ENCODE measurements at regions of chr17 and their contacts with region 1.

Region 1: GRCh38 chr17:59753522-59754467 is 46.3 kb downstream of the VMP1 start:
- DNase-seq: peak in 14 of 35 experiments; percentile 2 to 89 (median 13)
- ATAC-seq: peak; percentile 85 to 92 (median 90)
- H3K4me3 ChIP-seq: no peak overlapping the region
- H3K4me3 Mint-ChIP-seq: peak overlapping the region; percentile 20 to 63 (median 56)
- H3K27ac ChIP-seq: peak overlapping the region; percentile 47
- H3K27ac Mint-ChIP-seq: peak overlapping the region; percentile 87 to 93
- H3K4me1 ChIP-seq: no peaks in the 10 kb centered on the region
- H3K4me1 Mint-ChIP-seq: peaks cover 18 to 47% (median 42%) of the 10 kb centered on the region in 3 donors
- H3K27me3 ChIP-seq: no peaks in the 10 kb centered on the region
- H3K27me3 Mint-ChIP-seq: no peaks in the 10 kb centered on the region

Region 2: GRCh38 chr17:59786536-59787319 is 32.9 kb after region 1 on chr17:
- CTCF ChIA-PET with region 1: interaction called, 6 to 22 read pairs
- POLR2A ChIA-PET with region 1: interaction called, 3 to 5 read pairs
- DNase-seq: peak; percentile 18 to 94 (median 69)
- ATAC-seq: peak; percentile 90 to 92 (median 90)
- H3K4me3 ChIP-seq: peak overlapping the region in 1 of 2 donors; percentile 37
- H3K4me3 Mint-ChIP-seq: peak overlapping the region; percentile 67 to 77 (median 75)
- H3K27ac ChIP-seq: peak overlapping the region; percentile 89
- H3K27ac Mint-ChIP-seq: peak overlapping the region; percentile 100
- H3K4me1 ChIP-seq: peaks cover 22 to 31% of the 10 kb centered on the region in 2 experiments
- H3K4me1 Mint-ChIP-seq: peaks cover 51 to 62% (median 61%) of the 10 kb centered on the region in 3 donors
- H3K27me3 ChIP-seq: no peaks in the 10 kb centered on the region
- H3K27me3 Mint-ChIP-seq: no peaks in the 10 kb centered on the region

Region 3: GRCh38 chr17:59853168-59853918 is 99.5 kb after region 1 on chr17:
- CTCF ChIA-PET with region 1: interaction called, 10 read pairs
- POLR2A ChIA-PET with region 1: interaction called, 6 to 10 read pairs
- DNase-seq: peak in 33 of 35 experiments; percentile 13 to 67 (median 42)
- ATAC-seq: peak; percentile 81 to 93 (median 86)
- H3K4me3 ChIP-seq: no peak overlapping the region
- H3K4me3 Mint-ChIP-seq: peak overlapping the region in 2 of 3 donors; percentile 5 to 24
- H3K27ac ChIP-seq: peak overlapping the region; percentile 25
- H3K27ac Mint-ChIP-seq: peak overlapping the region; percentile 65 to 69
- H3K4me1 ChIP-seq: peaks cover 0 to 33% of the 10 kb centered on the region in 2 experiments
- H3K4me1 Mint-ChIP-seq: peaks cover 31 to 41% (median 37%) of the 10 kb centered on the region in 3 donors
- H3K27me3 ChIP-seq: no peaks in the 10 kb centered on the region
- H3K27me3 Mint-ChIP-seq: no peaks in the 10 kb centered on the region

Region 4: GRCh38 chr17:59892924-59893676 is 139.3 kb after region 1 on chr17 and contains the starts of genes RPS6KB1 and TUBD1:
- CTCF ChIA-PET with region 1: interaction called in 1 of 2 experiments, 10 read pairs
- POLR2A ChIA-PET with region 1: interaction called in 1 of 2 experiments, 3 read pairs
- DNase-seq: peak; percentile 89 to 100 (median 97)
- ATAC-seq: peak; percentile 94 to 95 (median 94)
- H3K4me3 ChIP-seq: peak within 1 kb of the TSS; percentile 95 to 99
- H3K4me3 Mint-ChIP-seq: peak within 1 kb of the TSS; percentile 99 to 100 (median 99)
- H3K27ac ChIP-seq: peak within 1 kb of the TSS; percentile 91
- H3K27ac Mint-ChIP-seq: peak within 1 kb of the TSS; percentile 99
- H3K4me1 ChIP-seq: peaks cover 15 to 35% of the 10 kb centered on the region in 2 experiments
- H3K4me1 Mint-ChIP-seq: peaks cover 65 to 66% (median 65%) of the 10 kb centered on the region in 3 donors
- H3K27me3 ChIP-seq: no peaks in the 10 kb centered on the region
- H3K27me3 Mint-ChIP-seq: no peaks in the 10 kb centered on the region
- total RNA-seq, gene RPS6KB1: 57.7 to 90.4 (median 61.7) TPM
- total RNA-seq, gene TUBD1: 16.6 to 27.9 (median 25.1) TPM